WTC11 (cell line): ENCODE measurements at regions of chr7 and their contacts with region 1.

Region 1: DNA sequence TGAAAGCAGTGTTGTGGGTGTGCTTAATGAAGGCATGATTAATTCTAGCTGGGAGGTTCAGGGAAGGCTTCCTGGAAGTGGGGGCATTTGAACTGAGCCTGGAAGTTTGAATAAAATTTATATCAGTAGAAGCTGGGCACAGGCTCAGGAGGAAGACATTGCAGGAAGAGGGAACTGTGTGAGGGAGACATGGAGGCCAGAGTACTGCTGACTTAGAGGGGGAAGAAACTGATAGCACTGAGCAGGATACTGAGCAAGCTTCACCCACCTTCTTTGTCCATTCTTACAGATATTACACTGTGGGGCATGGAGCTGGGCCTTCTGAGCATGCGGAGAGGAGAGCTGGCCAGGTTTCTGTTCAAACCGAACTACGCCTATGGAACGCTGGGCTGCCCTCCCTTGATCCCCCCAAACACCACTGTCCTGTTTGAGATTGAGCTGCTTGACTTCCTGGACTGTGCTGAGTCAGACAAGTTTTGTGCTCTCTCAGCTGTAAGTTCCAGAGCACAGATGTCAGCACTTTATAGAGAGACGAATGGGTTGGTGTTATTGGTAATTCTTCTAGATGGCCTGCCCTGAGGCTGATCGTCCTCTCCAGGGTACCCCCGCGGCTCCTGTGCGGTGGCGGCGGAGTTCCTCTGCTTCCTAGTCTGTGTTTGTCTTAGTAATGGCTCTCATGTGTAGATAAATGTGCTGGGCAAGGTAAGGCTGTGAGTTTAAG is 2.1 kb downstream of the FKBP6 start:
- DNase-seq: no peak
- ATAC-seq: no peak
- H3K4me3 Mint-ChIP-seq: no peak overlapping the region
- H3K27ac Mint-ChIP-seq: no peak overlapping the region
- H3K4me1 Mint-ChIP-seq: peaks cover 16% of the 10 kb centered on the region
- H3K27me3 Mint-ChIP-seq: no peaks in the 10 kb centered on the region; the same call in 1 of the 2 replicates
- CTCF ChIP-seq: no peak

Region 2: DNA sequence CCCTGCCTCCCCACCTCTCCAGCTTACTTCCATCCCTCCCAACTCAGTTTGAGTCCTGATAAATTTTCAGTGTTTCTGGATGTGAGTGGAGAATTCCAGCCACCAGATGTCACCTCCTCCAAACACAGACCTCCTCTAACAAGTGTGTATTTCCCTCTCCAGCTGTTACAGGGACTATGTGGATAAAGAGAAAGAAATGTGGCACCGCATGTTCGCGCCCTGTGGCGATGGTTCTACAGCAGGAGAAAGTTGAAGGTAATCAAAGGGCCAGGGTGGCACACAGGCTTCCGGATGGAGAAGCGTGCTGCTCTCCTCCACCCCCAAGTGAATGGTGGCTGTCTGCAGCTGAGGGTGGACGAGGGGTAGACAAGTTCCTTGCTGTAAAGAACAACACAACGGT is 12.6 kb after region 1 on chr7:
- CTCF ChIA-PET with region 1: interaction called, 26 read pairs
- POLR2A ChIA-PET with region 1: interaction called, 3 read pairs
- DNase-seq: no peak
- ATAC-seq: peak; percentile 69
- H3K4me3 Mint-ChIP-seq: no peak overlapping the region
- H3K27ac Mint-ChIP-seq: peak overlapping the region; percentile 5
- H3K4me1 Mint-ChIP-seq: peaks cover 40% of the 10 kb centered on the region
- H3K27me3 Mint-ChIP-seq: no peaks in the 10 kb centered on the region; the same call in 1 of the 2 replicates
- CTCF ChIP-seq: no peak

Region 3: GRCh38 chr7:73397521-73398281 is 67.7 kb after region 1 on chr7:
- CTCF ChIA-PET with region 1: interaction called, 20 read pairs
- POLR2A ChIA-PET with region 1: no interaction called
- DNase-seq: peak; percentile 38
- ATAC-seq: peak; percentile 79
- H3K4me3 Mint-ChIP-seq: peak overlapping the region; percentile 73
- H3K27ac Mint-ChIP-seq: peak overlapping the region; percentile 51
- H3K4me1 Mint-ChIP-seq: peaks cover 19% of the 10 kb centered on the region
- H3K27me3 Mint-ChIP-seq: peaks cover 4% of the 10 kb centered on the region
- CTCF ChIP-seq: no peak

Region 4: DNA sequence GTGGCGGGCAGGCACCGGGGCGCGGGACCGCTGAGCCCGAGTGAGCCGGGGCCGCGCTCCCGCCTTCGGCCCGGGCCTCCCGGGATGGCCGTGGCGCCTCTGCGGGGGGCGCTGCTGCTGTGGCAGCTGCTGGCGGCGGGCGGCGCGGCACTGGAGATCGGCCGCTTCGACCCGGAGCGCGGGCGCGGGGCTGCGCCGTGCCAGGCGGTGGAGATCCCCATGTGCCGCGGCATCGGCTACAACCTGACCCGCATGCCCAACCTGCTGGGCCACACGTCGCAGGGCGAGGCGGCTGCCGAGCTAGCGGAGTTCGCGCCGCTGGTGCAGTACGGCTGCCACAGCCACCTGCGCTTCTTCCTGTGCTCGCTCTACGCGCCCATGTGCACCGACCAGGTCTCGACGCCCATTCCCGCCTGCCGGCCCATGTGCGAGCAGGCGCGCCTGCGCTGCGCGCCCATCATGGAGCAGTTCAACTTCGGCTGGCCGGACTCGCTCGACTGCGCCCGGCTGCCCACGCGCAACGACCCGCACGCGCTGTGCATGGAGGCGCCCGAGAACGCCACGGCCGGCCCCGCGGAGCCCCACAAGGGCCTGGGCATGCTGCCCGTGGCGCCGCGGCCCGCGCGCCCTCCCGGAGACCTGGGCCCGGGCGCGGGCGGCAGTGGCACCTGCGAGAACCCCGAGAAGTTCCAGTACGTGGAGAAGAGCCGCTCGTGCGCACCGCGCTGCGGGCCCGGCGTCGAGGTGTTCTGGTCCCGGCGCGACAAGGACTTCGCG is 104.1 kb after region 1 on chr7:
- CTCF ChIA-PET with region 1: interaction called, 26 read pairs
- POLR2A ChIA-PET with region 1: no interaction called
- DNase-seq: peak; percentile 62
- ATAC-seq: peak; percentile 13
- H3K4me3 Mint-ChIP-seq: peak overlapping the region; percentile 47
- H3K27ac Mint-ChIP-seq: no peak overlapping the region
- H3K4me1 Mint-ChIP-seq: peaks cover 4% of the 10 kb centered on the region; the same call in 1 of the 2 replicates
- H3K27me3 Mint-ChIP-seq: peaks cover 14% of the 10 kb centered on the region
- CTCF ChIP-seq: no peak

Region 5: GRCh38 chr7:73612598-73613269 is 282.7 kb after region 1 on chr7:
- CTCF ChIA-PET with region 1: no interaction called
- POLR2A ChIA-PET with region 1: interaction called, 10 read pairs
- DNase-seq: no peak
- ATAC-seq: peak; percentile 48
- H3K4me3 Mint-ChIP-seq: no peak overlapping the region
- H3K27ac Mint-ChIP-seq: peak overlapping the region; percentile 83
- H3K4me1 Mint-ChIP-seq: peaks cover 6% of the 10 kb centered on the region
- H3K27me3 Mint-ChIP-seq: no peaks in the 10 kb centered on the region; the same call in 1 of the 2 replicates
- CTCF ChIP-seq: no peak

Region 6: DNA sequence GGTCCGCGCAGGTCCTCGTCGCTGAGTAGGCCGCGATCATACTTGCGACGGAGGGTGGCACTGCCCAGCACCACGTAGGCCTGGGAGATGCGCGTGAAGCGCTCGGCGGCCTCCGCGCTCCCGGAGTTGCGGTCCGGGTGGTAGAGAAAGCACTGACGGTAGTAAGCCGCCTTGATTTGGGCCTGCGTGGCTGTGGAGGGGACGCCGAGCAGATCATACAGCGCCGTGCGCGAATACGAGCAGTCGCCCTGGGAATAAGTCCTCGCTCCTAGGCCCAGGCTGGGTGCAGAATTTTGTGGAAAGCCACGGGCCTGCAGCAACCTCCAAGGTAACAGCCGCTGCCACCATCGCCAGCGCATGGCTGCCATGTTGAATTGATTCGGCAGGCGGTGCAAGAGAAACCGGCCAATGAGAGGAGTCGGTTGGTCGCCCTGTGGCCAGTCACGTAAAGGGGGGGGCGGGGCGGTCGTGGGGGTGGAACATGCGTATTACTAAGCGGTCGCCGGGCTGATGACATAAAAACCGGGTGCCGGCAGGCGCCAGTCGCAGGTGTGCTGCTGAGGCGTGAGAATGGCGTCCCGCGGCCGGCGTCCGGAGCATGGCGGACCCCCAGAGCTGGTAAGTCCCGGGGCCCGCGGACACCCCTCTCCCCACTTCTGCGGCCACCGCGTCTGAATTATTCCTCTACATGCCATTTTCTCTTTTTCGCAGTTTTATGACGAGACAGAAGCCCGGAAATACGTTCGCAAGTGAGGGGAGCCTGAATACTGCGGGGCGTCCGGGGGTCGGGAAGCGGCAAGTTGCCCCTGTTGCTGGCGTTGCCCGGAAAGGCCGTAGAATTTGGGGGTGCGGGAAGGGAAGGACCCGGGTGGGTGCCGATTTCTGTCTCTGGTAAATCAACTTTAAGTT is 353.3 kb after region 1 on chr7 and contains the starts of genes BUD23 and DNAJC30:
- CTCF ChIA-PET with region 1: no interaction called
- POLR2A ChIA-PET with region 1: no interaction called
- DNase-seq: peak; percentile 97
- ATAC-seq: peak; percentile 95
- H3K4me3 Mint-ChIP-seq: peak within 1 kb of the TSS; percentile 95
- H3K27ac Mint-ChIP-seq: peak within 1 kb of the TSS; percentile 94
- H3K4me1 Mint-ChIP-seq: peaks cover 19% of the 10 kb centered on the region
- H3K27me3 Mint-ChIP-seq: no peaks in the 10 kb centered on the region
- CTCF ChIP-seq: no peak
- total RNA-seq, gene BUD23: 80.5 to 91.9 TPM (median 84.4 TPM) in 3 replicates
- total RNA-seq, gene DNAJC30: 6.8 to 7.1 TPM (median 6.8 TPM) in 3 replicates